G401 (cell line): ENCODE measurements at regions of chr19 and their contacts with region 1.

Region 1: DNA sequence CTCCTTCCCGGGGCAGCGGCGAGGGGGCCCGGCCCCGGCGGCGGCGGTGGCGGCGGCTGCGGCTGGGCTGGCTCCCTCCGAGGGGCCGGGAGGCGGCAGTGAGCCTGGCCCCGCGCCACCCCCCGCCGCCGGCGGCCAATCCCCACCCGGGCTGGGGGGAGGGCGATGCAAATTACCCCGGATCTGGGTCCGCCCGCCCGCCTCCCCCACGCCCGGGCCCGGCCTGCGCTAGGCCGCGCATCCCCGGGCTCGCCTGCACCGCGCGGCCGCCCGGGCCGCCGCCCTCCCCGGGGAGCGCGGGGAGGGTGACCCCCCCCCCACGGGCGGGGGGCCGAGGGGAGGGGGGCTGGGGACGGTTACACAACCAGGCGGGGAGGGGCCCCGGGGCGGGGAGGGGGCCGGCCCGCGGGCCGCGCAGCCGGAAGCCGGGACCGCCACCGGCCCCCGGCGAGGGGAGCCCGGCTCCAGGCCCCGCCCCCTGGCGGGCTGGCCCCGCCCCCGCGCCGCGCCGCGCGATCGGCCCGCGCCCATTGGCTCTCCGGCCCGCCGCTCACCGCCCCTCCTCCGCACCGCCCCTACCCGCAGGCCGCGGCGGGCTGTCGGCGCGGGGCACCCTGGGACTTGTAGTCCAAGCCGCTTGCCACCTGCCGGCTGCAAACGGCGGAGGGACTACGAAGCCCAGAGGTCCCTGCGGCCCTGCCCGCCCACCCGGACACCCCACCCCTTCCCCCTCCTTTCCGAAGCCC is 1.1 kb downstream of the ZBTB7A start:
- DNase-seq: peak; percentile 96

Region 2: GRCh38 chr19:3995627-3996026 is 70.0 kb before region 1 on chr19:
- in situ Hi-C with region 1: no loop called
- DNase-seq: no peak

Region 3: DNA sequence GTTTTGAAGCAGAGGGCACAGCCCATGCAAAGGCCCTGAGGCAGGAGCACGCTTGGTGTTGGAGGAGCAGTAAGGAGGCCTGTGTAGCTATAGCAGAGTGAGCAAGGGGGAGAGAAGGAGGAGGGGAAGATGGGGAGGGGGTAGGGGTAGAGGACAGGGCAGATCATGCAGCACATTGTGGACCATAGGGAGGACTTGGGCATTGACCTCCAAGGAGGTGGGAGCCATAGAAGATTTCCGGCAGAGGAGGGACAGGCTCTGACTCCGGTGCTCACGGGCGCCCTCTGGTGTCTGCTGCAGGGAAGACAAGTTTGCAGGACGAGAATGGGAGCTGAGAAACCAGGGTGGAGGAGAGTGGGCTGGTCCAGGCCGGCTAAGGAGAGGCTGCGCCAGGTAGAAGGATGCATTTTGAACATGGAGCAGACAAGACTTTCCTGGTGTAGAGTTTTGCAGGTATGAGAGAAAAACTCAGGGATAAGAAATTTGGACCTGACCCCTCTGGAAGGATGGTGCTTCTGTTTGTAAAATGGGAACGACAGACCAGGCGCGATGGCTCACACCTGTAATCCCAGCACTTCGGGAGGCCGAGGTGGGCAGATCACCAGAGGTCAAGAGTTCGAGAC is 74.1 kb after region 1 on chr19:
- in situ Hi-C with region 1: loop called (anchors 10 kb)
- DNase-seq: peak; percentile 66